ENCODE measurements at regions of chr21 and their contacts with region 1.

Region 1: GRCh38 chr21:45074048-45074817 is at the start of gene ADARB1:
- DNase-seq: peak; percentile 50 to 82 (median 69)
- ATAC-seq: peak; percentile 84
- H3K4me3 ChIP-seq: peak within 1 kb of the TSS; percentile 65
- H3K4me3 Mint-ChIP-seq: peak within 1 kb of the TSS; percentile 91 to 100 (median 96)
- H3K27ac ChIP-seq: peak within 1 kb of the TSS; percentile 87
- H3K27ac Mint-ChIP-seq: peak within 1 kb of the TSS; percentile 86 to 98 (median 94)
- H3K4me1 ChIP-seq: peaks cover 31 to 34% of the 10 kb centered on the region in 2 donors
- H3K4me1 Mint-ChIP-seq: peaks cover 31 to 45% (median 41%) of the 10 kb centered on the region in 7 donors
- H3K27me3 ChIP-seq: no peaks in the 10 kb centered on the region
- H3K27me3 Mint-ChIP-seq: no peaks in the 10 kb centered on the region
- total RNA-seq, gene ADARB1: 35.7 to 52.2 (median 38.9) TPM

Region 2: GRCh38 chr21:44801468-44802395 is 272.5 kb before region 1 on chr21 and contains the start of gene UBE2G2:
- CTCF ChIA-PET with region 1: no interaction called
- POLR2A ChIA-PET with region 1: no interaction called
- intact Hi-C with region 1: loop called in 1 of 2 experiments (anchors 1 kb)
- DNase-seq: peak; percentile 79 to 95 (median 88)
- ATAC-seq: peak; percentile 95
- H3K4me3 ChIP-seq: peak within 1 kb of the TSS; percentile 92
- H3K4me3 Mint-ChIP-seq: peak within 1 kb of the TSS; percentile 88 to 100 (median 96)
- H3K27ac ChIP-seq: peak within 1 kb of the TSS; percentile 85
- H3K27ac Mint-ChIP-seq: peak within 1 kb of the TSS; percentile 85 to 99 (median 94)
- H3K4me1 ChIP-seq: peaks cover 19 to 27% of the 10 kb centered on the region in 2 donors
- H3K4me1 Mint-ChIP-seq: peaks cover 24 to 53% (median 45%) of the 10 kb centered on the region in 7 donors
- H3K27me3 ChIP-seq: no peaks in the 10 kb centered on the region
- H3K27me3 Mint-ChIP-seq: no peaks in the 10 kb centered on the region
- total RNA-seq, gene UBE2G2: 108 to 150 (median 129) TPM

Region 3: DNA sequence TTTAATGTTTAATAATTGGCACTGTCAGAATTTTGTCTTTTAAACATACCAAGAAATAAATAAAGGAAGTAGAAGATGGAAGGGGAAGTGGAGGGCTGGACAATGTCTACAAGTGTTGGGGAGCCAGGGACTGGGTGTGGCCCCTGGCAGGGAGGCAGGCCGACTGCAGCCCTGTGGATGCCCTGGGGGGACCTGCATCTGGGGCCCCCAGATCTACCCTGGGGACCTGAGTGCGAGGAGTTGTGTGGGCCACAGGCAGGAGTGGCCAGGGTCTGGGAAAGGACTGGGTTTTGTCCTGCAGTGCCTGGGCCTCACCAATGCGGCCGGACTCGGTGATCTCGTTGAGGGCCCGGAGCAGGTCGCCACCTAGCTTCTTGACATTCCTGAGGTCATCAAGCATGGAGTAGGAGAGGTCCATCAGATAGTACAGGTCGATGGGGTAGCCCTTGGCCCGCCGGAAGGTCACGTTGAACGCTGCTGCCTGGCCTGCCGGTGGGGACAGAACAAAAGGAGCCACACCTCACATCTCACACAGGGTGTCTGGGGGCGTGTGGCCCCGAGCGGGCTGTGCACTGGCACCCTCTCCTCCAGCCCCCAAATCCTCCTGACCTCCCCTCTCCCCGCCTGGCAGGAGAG is 171.1 kb before region 1 on chr21:
- CTCF ChIA-PET with region 1: no interaction called
- POLR2A ChIA-PET with region 1: no interaction called
- intact Hi-C with region 1: no loop called
- DNase-seq: no peak
- ATAC-seq: peak; percentile 43
- H3K4me3 ChIP-seq: no peak overlapping the region
- H3K4me3 Mint-ChIP-seq: peak overlapping the region in 1 of 10 donors; percentile 29
- H3K27ac ChIP-seq: no peak overlapping the region
- H3K27ac Mint-ChIP-seq: peak overlapping the region in 5 of 9 donors; percentile 6 to 71 (median 14)
- H3K4me1 ChIP-seq: peaks cover 0 to 23% of the 10 kb centered on the region in 2 donors
- H3K4me1 Mint-ChIP-seq: peaks cover 8 to 38% (median 30%) of the 10 kb centered on the region in 7 donors
- H3K27me3 ChIP-seq: no peaks in the 10 kb centered on the region
- H3K27me3 Mint-ChIP-seq: no peaks in the 10 kb centered on the region

Region 4: GRCh38 chr21:44927587-44928461 is 146.4 kb before region 1 on chr21:
- CTCF ChIA-PET with region 1: no interaction called
- POLR2A ChIA-PET with region 1: no interaction called
- intact Hi-C with region 1: loop called (anchors 5 kb)
- DNase-seq: peak; percentile 43 to 95 (median 85)
- ATAC-seq: peak; percentile 84
- H3K4me3 ChIP-seq: peak overlapping the region; percentile 100
- H3K4me3 Mint-ChIP-seq: peak overlapping the region; percentile 86 to 97 (median 93)
- H3K27ac ChIP-seq: peak overlapping the region; percentile 79
- H3K27ac Mint-ChIP-seq: peak overlapping the region; percentile 86 to 98 (median 95)
- H3K4me1 ChIP-seq: peaks cover 54 to 62% of the 10 kb centered on the region in 2 donors
- H3K4me1 Mint-ChIP-seq: peaks cover 65 to 82% (median 78%) of the 10 kb centered on the region in 7 donors
- H3K27me3 ChIP-seq: no peaks in the 10 kb centered on the region
- H3K27me3 Mint-ChIP-seq: no peaks in the 10 kb centered on the region

Region 5: DNA sequence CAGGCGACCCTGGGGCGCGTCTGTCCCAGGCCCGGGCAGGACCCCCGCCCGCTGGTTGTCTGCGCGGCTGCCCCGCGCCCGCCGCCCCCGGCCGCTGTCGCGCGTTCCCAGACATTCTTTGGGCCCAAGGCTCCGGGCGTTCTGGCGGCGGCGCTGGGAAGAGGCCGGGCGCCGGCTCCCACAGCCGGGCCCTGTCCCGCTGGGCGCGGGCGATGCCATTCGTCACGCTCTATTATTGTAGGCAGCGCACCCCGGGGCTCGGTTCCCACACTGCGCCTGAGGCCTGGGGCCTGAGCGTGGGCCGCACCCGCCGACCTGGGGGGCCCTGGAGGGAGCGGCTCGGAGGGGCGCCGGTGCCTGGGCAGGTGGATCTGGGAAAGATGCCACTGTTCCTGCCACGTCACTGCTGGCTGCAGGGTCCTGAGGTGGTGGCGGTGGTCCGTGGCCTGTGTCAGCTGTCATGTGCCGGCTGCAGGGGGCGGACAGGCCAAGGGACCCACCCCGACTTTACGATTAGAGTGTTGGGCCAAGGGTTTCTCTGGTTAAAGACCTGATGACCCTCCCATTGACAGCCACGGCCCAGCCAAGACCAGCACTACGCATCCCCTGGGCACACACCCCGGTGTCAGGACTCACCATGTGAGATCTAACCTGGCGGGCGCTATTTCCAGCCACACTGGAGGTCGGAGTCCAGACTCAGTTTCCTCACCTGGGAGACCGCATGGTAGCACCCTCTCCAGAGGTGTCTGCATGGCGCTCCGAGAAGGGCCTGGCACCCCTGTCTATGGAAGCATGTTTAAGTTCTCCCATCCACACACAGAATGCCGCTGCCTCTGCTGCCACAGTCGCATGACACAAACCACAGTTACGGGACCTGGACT is 54.9 kb before region 1 on chr21:
- CTCF ChIA-PET with region 1: no interaction called
- POLR2A ChIA-PET with region 1: no interaction called
- intact Hi-C with region 1: no loop called
- DNase-seq: peak in 1 of 9 donors; percentile 1
- ATAC-seq: no peak
- H3K4me3 ChIP-seq: no peak overlapping the region
- H3K4me3 Mint-ChIP-seq: peak overlapping the region in 9 of 10 donors; percentile 9 to 64 (median 47)
- H3K27ac ChIP-seq: no peak overlapping the region
- H3K27ac Mint-ChIP-seq: no peak overlapping the region
- H3K4me1 ChIP-seq: no peaks in the 10 kb centered on the region
- H3K4me1 Mint-ChIP-seq: peaks cover 2 to 8% (median 8%) of the 10 kb centered on the region in 7 donors
- H3K27me3 ChIP-seq: peaks cover 4 to 6% of the 10 kb centered on the region in 2 donors
- H3K27me3 Mint-ChIP-seq: peaks cover 27 to 53% (median 35%) of the 10 kb centered on the region in 5 donors

Region 6: DNA sequence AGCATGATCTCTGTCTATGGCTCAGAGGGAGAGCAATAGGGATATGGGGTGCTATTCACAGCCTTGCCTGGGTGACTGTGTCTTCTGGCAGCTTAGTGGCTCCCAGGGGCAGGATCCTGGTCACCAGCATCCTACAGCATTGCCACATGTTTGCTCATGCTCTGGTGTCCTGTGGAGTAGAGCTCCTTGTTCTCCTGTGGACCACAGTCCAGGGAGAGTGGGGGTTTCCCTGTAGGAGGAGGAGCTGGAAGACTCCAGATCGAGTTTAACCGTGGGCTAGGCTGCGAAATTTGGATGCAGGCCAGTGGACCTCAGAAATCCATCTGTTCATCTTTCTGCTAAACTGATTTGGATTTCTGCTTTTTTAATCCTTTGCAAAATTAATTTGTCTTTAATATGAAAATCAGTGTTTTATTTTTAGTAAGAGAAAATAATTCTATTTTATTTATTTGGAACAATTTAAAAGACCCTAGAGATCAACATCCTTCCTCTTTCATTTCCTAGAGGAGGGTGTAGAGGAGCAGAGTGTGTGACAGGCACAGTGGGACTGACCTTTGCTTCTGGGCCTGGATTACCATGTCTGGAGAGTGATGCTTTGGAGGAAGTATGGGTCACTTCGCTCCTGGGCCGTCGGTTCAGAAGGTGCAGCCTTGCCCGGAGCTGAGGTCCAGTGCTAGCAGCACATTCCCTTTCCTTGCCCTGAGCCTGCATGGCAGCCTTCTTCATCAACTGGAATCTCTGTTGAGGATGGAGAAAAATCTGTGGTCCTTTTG is 17.5 kb after region 1 on chr21:
- CTCF ChIA-PET with region 1: interaction called, 5 read pairs
- POLR2A ChIA-PET with region 1: interaction called, 6 read pairs
- intact Hi-C with region 1: loop called (anchors 1 to 2 kb)
- DNase-seq: no peak
- ATAC-seq: no peak
- H3K4me3 ChIP-seq: no peak overlapping the region
- H3K4me3 Mint-ChIP-seq: no peak overlapping the region
- H3K27ac ChIP-seq: no peak overlapping the region
- H3K27ac Mint-ChIP-seq: peak overlapping the region in 2 of 9 donors; percentile 24 to 49
- H3K4me1 ChIP-seq: peaks cover 17 to 40% of the 10 kb centered on the region in 2 donors
- H3K4me1 Mint-ChIP-seq: peaks cover 42 to 90% (median 82%) of the 10 kb centered on the region in 7 donors
- H3K27me3 ChIP-seq: no peaks in the 10 kb centered on the region
- H3K27me3 Mint-ChIP-seq: no peaks in the 10 kb centered on the region

Region 7: DNA sequence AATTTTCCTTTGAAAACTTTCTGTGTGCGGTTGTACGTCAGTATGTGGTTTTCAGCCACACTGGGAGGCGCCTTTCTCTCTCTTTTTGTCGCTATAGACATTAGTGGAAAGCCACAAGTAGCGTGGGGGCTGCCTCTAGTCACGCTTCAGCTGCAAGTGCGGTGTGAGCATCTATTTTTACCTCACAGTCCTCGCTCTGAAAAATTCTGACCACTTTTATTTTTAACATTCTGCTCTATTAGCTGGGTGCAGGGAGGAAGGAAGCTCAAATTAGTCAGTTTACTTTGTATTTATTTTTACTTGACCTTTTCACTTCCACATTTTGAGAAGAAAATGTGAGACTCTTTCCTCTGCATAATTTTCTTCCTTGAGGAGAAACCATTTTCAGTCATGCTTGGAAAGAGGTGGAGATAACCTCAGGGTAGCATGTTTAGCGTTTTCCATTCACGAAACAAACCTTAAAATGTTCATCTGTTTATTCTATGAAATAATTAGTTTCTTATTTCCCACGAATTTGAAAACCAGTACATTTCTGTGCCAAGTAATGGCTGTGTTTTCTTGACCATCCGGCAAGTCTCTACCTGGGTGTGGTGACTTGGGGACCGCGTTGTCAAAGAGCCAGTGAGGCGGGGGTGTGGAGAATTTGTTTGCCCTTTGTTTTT is 35.7 kb after region 1 on chr21:
- CTCF ChIA-PET with region 1: no interaction called
- POLR2A ChIA-PET with region 1: interaction called, 4 read pairs
- intact Hi-C with region 1: loop called (anchors 1 to 2 kb)
- DNase-seq: peak in 6 of 9 donors; percentile 33 to 49 (median 35)
- ATAC-seq: peak; percentile 77
- H3K4me3 ChIP-seq: peak overlapping the region; percentile 29
- H3K4me3 Mint-ChIP-seq: peak overlapping the region; percentile 69 to 88 (median 81)
- H3K27ac ChIP-seq: no peak overlapping the region
- H3K27ac Mint-ChIP-seq: peak overlapping the region in 8 of 9 donors; percentile 0 to 90 (median 66)
- H3K4me1 ChIP-seq: peaks cover 0 to 20% of the 10 kb centered on the region in 2 donors
- H3K4me1 Mint-ChIP-seq: peaks cover 49 to 82% (median 65%) of the 10 kb centered on the region in 7 donors
- H3K27me3 ChIP-seq: no peaks in the 10 kb centered on the region
- H3K27me3 Mint-ChIP-seq: no peaks in the 10 kb centered on the region

Region 8: DNA sequence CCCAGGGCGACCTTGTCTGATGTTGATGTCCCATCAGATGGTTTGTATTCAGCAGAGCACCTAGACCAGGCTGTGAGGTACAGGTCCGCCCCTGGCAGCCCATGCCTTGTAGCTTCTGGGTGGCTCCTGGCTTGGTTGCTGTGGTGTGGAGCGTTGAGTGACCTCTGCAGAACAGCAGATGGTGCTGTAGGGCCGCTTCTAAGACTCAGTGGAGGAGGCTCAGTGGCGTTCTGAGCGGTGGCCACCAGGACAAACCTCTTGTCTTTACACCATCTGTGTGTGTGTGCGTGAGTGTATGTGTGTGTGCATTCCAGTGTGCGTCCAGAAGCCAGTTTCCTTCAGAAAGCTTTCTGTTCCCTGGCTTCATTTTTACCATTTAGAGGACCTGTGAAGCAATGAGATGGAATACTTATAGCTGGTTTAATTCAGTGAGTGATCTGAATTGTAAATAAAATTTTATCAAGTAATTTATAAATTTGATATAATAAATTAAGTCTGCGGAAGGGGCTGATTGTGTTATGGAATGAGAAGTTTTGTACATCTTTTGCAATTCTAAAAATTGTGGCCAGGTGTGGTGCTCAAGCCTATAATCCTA is 66.2 kb after region 1 on chr21:
- CTCF ChIA-PET with region 1: interaction called, 10 read pairs
- POLR2A ChIA-PET with region 1: interaction called, 5 read pairs
- intact Hi-C with region 1: no loop called
- DNase-seq: peak; percentile 32 to 62 (median 51)
- ATAC-seq: peak; percentile 95
- H3K4me3 ChIP-seq: no peak overlapping the region
- H3K4me3 Mint-ChIP-seq: no peak overlapping the region
- H3K27ac ChIP-seq: no peak overlapping the region
- H3K27ac Mint-ChIP-seq: no peak overlapping the region
- H3K4me1 ChIP-seq: no peaks in the 10 kb centered on the region
- H3K4me1 Mint-ChIP-seq: peaks cover 4 to 24% (median 17%) of the 10 kb centered on the region in 7 donors
- H3K27me3 ChIP-seq: no peaks in the 10 kb centered on the region
- H3K27me3 Mint-ChIP-seq: no peaks in the 10 kb centered on the region

Measured in naive thymus-derived CD4-positive, alpha-beta T cell (primary cell).